PC-9 (cell line): ENCODE measurements at regions of chr5 and their contacts with region 1.

Region 1: GRCh38 chr5:39501397-39501796 is 76.6 kb upstream of the DAB2 start:
- DNase-seq: peak in 1 of 2 experiments; percentile 31
- H3K4me3 ChIP-seq: no peak overlapping the region
- H3K27ac ChIP-seq: no peak overlapping the region
- H3K4me1 ChIP-seq: peaks cover 11% of the 10 kb centered on the region
- H3K27me3 ChIP-seq: no peaks in the 10 kb centered on the region
- CTCF ChIP-seq: no peak

Region 2: GRCh38 chr5:39478851-39479250 is 22.5 kb before region 1 on chr5:
- CTCF ChIA-PET with region 1: no interaction called
- POLR2A ChIA-PET with region 1: interaction called, 8 read pairs
- intact Hi-C with region 1: loop called (anchors 2 kb)
- DNase-seq: peak in 1 of 2 experiments; percentile 22
- H3K4me3 ChIP-seq: no peak overlapping the region
- H3K27ac ChIP-seq: no peak overlapping the region
- H3K4me1 ChIP-seq: no peaks in the 10 kb centered on the region
- H3K27me3 ChIP-seq: no peaks in the 10 kb centered on the region
- CTCF ChIP-seq: no peak

Region 3: DNA sequence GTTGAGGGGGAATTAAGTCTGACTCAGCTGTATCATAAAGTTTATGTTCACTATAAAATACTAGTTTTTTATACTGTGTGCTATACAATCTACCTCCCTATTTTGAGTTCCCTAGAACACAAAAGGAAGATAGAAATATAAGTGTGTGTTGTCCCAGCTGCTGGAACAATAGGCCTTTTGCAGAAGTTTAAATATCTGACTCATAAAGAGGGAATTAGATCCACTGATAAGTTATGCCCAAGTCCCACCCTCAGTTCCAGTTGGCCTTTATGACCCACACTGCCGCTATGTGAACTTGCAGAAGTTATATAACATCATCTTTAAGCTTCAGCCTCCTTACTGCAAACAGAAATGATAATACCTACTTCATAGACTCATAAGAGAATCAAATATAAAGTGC is 11.8 kb after region 1 on chr5:
- CTCF ChIA-PET with region 1: interaction called, 13 read pairs
- POLR2A ChIA-PET with region 1: interaction called, 4 read pairs
- intact Hi-C with region 1: no loop called
- DNase-seq: peak; percentile 55 to 70
- H3K4me3 ChIP-seq: no peak overlapping the region
- H3K27ac ChIP-seq: no peak overlapping the region
- H3K4me1 ChIP-seq: peaks cover 16% of the 10 kb centered on the region
- H3K27me3 ChIP-seq: no peaks in the 10 kb centered on the region
- CTCF ChIP-seq: no peak